ENCODE measurements at regions of chr2 and their contacts with region 1.

Region 1: GRCh38 chr2:216777650-216778273 is 82.1 kb downstream of the TNP1 start:
- DNase-seq: peak; percentile 33
- H3K4me3 ChIP-seq: no peak overlapping the region
- H3K27ac ChIP-seq: no peak overlapping the region
- H3K4me1 ChIP-seq: no peaks in the 10 kb centered on the region
- H3K27me3 ChIP-seq: no peaks in the 10 kb centered on the region
- CTCF ChIP-seq: peak; percentile 71 to 80
- POLR2A ChIP-seq: no peak

Region 2: GRCh38 chr2:216560838-216561270 is 216.9 kb before region 1 on chr2:
- CTCF ChIA-PET with region 1: no interaction called
- POLR2A ChIA-PET with region 1: no interaction called
- dilution Hi-C with region 1: no loop called
- intact Hi-C with region 1: no loop called
- DNase-seq: no peak
- H3K4me3 ChIP-seq: no peak overlapping the region
- H3K27ac ChIP-seq: no peak overlapping the region
- H3K4me1 ChIP-seq: no peaks in the 10 kb centered on the region
- H3K27me3 ChIP-seq: no peaks in the 10 kb centered on the region
- CTCF ChIP-seq: no peak
- POLR2A ChIP-seq: no peak

Region 3: GRCh38 chr2:216698895-216699294 is 78.9 kb before region 1 on chr2:
- CTCF ChIA-PET with region 1: no interaction called
- POLR2A ChIA-PET with region 1: no interaction called
- dilution Hi-C with region 1: no loop called
- intact Hi-C with region 1: loop called (anchors 1 kb)
- DNase-seq: peak; percentile 59
- H3K4me3 ChIP-seq: no peak overlapping the region
- H3K27ac ChIP-seq: no peak overlapping the region
- H3K4me1 ChIP-seq: peaks cover 3% of the 10 kb centered on the region
- H3K27me3 ChIP-seq: peaks cover 52 to 58% of the 10 kb centered on the region in 2 experiments
- CTCF ChIP-seq: peak; percentile 52
- POLR2A ChIP-seq: no peak

Region 4: GRCh38 chr2:216752855-216753505 is 24.8 kb before region 1 on chr2:
- CTCF ChIA-PET with region 1: interaction called, 4 read pairs
- POLR2A ChIA-PET with region 1: no interaction called
- dilution Hi-C with region 1: no loop called
- intact Hi-C with region 1: loop called (anchors 1 kb)
- DNase-seq: peak; percentile 50
- H3K4me3 ChIP-seq: no peak overlapping the region
- H3K27ac ChIP-seq: no peak overlapping the region
- H3K4me1 ChIP-seq: no peaks in the 10 kb centered on the region
- H3K27me3 ChIP-seq: peaks cover 0 to 4% of the 10 kb centered on the region in 2 experiments
- CTCF ChIP-seq: no peak
- POLR2A ChIP-seq: no peak

Region 5: DNA sequence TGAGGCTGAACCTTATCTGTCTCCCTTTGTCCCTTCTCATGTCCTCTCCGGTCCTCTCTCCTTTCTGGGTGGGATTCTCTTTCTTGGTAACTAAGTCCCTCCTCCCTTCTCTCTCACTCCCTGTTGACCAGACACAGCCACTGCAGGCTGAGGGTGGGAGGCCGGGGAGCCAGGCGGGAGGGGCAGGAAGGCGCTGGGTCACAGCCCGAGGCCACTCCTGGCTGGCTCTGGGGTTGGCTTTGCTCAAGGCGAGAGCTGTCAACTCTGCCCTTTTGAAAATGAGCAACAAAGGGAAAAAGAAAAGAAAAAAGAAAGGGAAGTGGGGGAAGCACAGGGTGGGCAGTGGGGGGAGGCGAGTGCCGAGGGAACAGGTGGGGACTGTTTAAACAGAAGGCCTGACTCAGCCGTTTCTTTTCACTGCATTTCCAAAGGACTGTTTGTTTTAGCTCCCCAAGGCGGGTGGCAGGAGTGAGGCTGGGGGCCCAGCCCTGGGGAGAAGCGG is 11.9 kb before region 1 on chr2:
- CTCF ChIA-PET with region 1: no interaction called
- POLR2A ChIA-PET with region 1: no interaction called
- dilution Hi-C with region 1: no loop called
- intact Hi-C with region 1: loop called (anchors 1 kb)
- DNase-seq: no peak
- H3K4me3 ChIP-seq: no peak overlapping the region
- H3K27ac ChIP-seq: no peak overlapping the region
- H3K4me1 ChIP-seq: no peaks in the 10 kb centered on the region
- H3K27me3 ChIP-seq: peaks cover 0 to 2% of the 10 kb centered on the region in 2 experiments
- CTCF ChIP-seq: no peak
- POLR2A ChIP-seq: no peak

Measured in endothelial cell of umbilical vein (primary cell).